ENCODE measurements at regions of chr2 and their contacts with region 1.

Region 1: GRCh38 chr2:136844546-136844945 is 79.2 kb downstream of the THSD7B start:
- DNase-seq: no peak
- H3K4me3 ChIP-seq: no peak overlapping the region
- H3K27ac ChIP-seq: no peak overlapping the region
- H3K4me1 ChIP-seq: no peaks in the 10 kb centered on the region
- CTCF ChIP-seq: no peak

Region 2: GRCh38 chr2:136858656-136859055 is 14.1 kb after region 1 on chr2:
- CTCF ChIA-PET with region 1: no interaction called
- POLR2A ChIA-PET with region 1: no interaction called
- intact Hi-C with region 1: no loop called
- DNase-seq: no peak
- H3K4me3 ChIP-seq: no peak overlapping the region
- H3K27ac ChIP-seq: no peak overlapping the region
- H3K4me1 ChIP-seq: no peaks in the 10 kb centered on the region
- CTCF ChIP-seq: no peak

Region 3: DNA sequence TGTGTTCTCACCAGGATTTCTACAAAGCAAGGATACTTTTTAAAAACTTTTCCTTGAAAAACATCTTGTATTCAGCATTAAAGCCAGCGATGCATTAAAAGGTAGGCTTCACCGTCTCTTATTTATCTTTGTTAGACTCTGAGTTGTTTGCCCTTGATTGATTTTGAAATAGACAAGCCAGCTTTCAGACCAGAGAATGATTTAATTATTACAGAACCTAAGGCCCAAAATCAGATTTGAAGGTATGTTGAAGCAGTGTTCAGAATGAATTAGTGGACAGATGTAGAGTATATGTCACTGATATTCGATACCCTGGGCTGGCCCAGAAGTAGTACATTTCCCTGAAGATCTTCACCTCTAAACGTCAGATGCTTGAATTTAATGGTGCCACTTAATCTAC is 57.2 kb after region 1 on chr2:
- CTCF ChIA-PET with region 1: no interaction called
- POLR2A ChIA-PET with region 1: interaction called, 10 read pairs
- intact Hi-C with region 1: no loop called
- DNase-seq: no peak
- H3K4me3 ChIP-seq: no peak overlapping the region
- H3K27ac ChIP-seq: no peak overlapping the region
- H3K4me1 ChIP-seq: no peaks in the 10 kb centered on the region
- CTCF ChIP-seq: no peak

Region 4: GRCh38 chr2:137405501-137405900 is 561.0 kb after region 1 on chr2:
- CTCF ChIA-PET with region 1: no interaction called
- POLR2A ChIA-PET with region 1: no interaction called
- intact Hi-C with region 1: no loop called
- DNase-seq: no peak
- H3K4me3 ChIP-seq: no peak overlapping the region
- H3K27ac ChIP-seq: no peak overlapping the region
- H3K4me1 ChIP-seq: no peaks in the 10 kb centered on the region
- CTCF ChIP-seq: no peak